ENCODE measurements at regions of chr15 and their contacts with region 1.

Region 1: DNA sequence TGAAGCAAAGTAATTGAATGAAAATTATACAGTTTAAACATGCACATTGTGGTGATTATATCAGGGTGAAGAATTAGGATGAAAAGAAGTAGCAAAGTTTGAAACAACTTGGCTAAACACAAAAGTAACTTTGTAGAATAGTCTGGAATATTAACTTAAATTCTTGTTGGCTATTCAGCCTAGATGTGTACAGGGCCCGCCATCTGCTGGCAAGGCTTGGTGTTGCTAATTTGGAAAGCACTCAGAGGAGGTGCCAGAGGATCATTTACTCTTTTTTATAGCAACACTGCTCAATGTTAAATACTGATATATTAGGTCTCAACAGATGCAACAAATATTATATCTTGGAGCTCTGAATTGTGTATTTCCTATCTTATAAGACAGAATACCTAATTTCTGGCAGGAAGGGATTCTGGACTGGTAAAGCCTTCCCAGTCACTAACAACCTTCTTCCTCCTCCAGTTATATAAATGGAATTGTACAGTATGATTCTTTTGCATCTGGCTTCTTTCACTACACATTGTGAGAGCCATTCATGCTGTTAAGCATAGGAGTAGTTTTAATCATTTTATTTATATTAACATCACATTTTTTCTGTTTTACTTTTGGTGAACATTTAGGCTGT is 36.1 kb downstream of the TTC23 start:
- DNase-seq: peak; percentile 76 to 96 (median 88)
- H3K4me3 ChIP-seq: no peak overlapping the region
- H3K27ac ChIP-seq: peak overlapping the region in 2 of 5 donors; percentile 71 to 81
- H3K4me1 ChIP-seq: peaks cover 8 to 15% of the 10 kb centered on the region in 2 donors
- H3K27me3 ChIP-seq: no peaks in the 10 kb centered on the region
- CTCF ChIP-seq: peak; percentile 72 to 96 (median 92)
- POLR2A ChIP-seq: no peak

Region 2: GRCh38 chr15:99090011-99090699 is 123.1 kb before region 1 on chr15:
- intact Hi-C with region 1: no loop called
- DNase-seq: no peak
- H3K4me3 ChIP-seq: no peak overlapping the region
- H3K27ac ChIP-seq: no peak overlapping the region
- H3K4me1 ChIP-seq: no peaks in the 10 kb centered on the region
- H3K27me3 ChIP-seq: no peaks in the 10 kb centered on the region
- CTCF ChIP-seq: no peak
- POLR2A ChIP-seq: no peak

Region 3: DNA sequence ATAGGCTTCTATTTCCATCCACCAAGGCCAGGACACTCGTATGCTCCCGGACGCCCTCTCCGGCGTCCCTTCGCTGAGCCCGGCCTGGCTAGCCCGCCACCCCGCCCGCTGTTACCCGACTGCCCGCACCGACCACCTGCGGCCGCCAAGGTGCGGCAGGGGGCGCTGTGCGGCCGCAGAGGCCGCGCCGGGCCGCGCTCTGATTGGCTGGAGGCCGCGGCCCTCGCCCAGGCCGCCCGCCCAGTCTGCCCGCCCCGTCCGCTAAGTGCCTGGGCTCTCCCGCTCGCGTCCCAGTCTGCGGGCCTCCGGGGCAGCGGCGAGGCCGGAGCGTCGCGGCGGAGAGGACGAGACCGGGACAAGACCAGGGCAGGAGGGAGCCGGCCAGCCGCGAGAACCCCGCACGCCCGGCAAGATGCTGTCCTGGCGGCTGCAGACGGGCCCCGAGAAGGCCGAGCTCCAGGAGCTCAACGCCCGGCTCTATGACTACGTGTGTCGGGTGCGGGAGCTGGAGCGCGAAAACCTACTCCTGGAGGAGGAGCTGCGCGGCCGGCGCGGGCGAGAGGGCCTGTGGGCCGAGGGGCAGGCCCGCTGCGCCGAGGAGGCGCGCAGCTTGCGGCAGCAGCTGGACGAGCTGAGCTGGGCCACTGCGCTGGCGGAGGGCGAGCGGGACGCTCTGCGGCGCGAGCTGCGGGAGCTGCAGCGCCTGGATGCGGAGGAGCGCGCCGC is 108.3 kb before region 1 on chr15 and contains the start of gene SYNM:
- intact Hi-C with region 1: loop called (anchors 2 to 5 kb)
- DNase-seq: peak; percentile 87 to 94 (median 92)
- H3K4me3 ChIP-seq: peak within 1 kb of the TSS in 3 of 4 donors; percentile 32 to 81 (median 43)
- H3K27ac ChIP-seq: peak within 1 kb of the TSS in 4 of 5 donors; percentile 32 to 90 (median 84)
- H3K4me1 ChIP-seq: peaks cover 9 to 30% of the 10 kb centered on the region in 2 donors
- H3K27me3 ChIP-seq: no peaks in the 10 kb centered on the region
- CTCF ChIP-seq: peak; percentile 25 to 99 (median 66)
- POLR2A ChIP-seq: peak; percentile 38 to 73
- total RNA-seq, gene SYNM: 9.3 to 44.6 (median 38.1) TPM